ENCODE measurements at regions of chr20 and their contacts with region 1.

Region 1: GRCh38 chr20:407133-407952 is 756 bp upstream of the RBCK1 start:
- DNase-seq: peak; percentile 74
- H3K4me3 Mint-ChIP-seq: peak overlapping the region; percentile 86
- H3K27ac Mint-ChIP-seq: peak overlapping the region; percentile 85
- H3K4me1 Mint-ChIP-seq: peaks cover 43% of the 10 kb centered on the region
- H3K27me3 Mint-ChIP-seq: no peaks in the 10 kb centered on the region

Region 2: GRCh38 chr20:381581-382290 is 25.6 kb before region 1 on chr20:
- CTCF ChIA-PET with region 1: interaction called, 4 read pairs
- intact Hi-C with region 1: loop called (anchors 1 kb)
- DNase-seq: peak; percentile 81
- H3K4me3 Mint-ChIP-seq: peak overlapping the region; percentile 83
- H3K27ac Mint-ChIP-seq: peak overlapping the region; percentile 83
- H3K4me1 Mint-ChIP-seq: peaks cover 25% of the 10 kb centered on the region
- H3K27me3 Mint-ChIP-seq: no peaks in the 10 kb centered on the region

Region 3: DNA sequence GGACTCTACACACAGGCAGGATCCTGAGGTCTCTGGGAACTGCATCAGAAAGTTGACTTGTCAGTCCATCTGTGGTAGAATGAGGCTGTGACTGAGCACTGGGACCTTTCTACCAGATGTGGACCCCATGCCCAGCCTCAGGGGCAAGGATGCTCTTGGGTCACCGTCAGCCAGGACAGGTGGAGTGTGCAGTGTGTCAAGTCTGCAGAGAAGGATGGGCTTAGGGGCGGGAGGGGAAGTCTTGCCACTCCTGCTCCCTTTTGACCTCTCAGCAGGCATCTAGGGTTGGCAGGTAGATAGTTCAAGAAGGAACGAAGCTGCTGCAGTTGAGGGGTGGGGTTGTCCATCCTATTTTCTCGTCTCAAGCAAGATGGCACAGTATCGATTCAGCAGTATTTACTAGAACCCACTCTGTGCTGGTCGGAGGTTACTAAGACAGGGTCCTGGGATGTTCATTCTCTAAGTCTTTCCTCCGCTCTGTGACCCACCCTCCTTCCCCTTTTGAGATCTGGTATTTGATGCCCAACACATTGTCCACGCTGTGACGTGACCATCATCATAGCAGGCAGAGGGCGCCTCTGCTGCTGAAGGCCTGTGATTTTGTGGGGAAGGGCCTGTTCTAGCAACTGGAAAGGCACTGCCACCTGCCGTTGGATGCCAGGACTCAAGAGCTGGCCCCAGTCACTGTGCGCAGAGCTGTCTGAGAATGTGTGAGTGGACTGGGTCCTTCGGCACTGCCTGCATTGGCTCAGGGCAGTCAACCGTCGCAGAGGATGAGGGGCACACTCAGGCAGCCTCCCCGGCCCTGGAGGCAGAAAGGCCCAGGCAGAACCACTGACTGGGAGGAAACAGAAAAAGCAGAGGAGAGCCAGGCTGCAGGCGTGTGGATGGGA is 23.9 kb after region 1 on chr20:
- CTCF ChIA-PET with region 1: interaction called, 5 read pairs
- intact Hi-C with region 1: loop called (anchors 1 kb)
- DNase-seq: peak; percentile 75
- H3K4me3 Mint-ChIP-seq: no peak overlapping the region
- H3K27ac Mint-ChIP-seq: peak overlapping the region; percentile 89
- H3K4me1 Mint-ChIP-seq: peaks cover 57% of the 10 kb centered on the region
- H3K27me3 Mint-ChIP-seq: no peaks in the 10 kb centered on the region

Region 4: DNA sequence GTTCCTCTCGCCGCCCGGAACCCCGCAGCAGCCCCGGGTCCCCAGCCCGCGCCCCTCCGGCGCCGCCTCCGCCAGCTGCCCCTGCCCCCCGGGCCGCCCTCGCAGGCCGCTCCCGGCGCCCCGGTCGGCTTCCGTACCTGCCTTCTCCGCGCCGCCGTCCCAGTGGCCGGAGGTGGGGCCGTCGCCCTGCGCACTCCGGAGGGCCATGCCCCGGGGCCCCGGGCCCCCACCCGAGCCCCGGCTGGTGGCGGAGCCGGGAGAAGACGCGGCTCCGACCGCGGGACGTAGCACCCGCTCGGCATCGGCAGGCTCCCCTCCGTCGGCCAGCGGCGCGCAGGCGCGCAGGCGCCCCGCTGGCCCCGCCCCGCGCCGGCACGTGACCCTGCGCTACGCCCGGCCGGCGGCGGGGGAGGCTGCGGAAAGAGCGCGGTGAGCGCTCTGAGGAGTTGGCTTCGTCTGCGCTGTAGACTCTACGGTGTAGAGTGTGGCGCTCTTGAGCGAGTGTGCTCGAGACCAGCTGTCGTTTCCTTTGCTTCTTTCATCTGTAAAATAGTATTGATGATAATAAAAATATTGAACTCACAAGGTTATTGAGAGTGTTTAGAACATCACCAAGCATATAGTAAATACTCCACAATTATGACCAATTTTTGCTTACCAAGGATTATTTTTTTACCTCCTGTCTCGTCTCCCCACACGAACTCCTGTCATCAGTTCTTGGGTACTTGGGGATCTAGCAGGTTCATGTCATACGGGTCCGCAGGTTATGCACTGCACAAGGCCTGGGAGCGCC is 55.1 kb after region 1 on chr20 and contains the start of gene TBC1D20:
- CTCF ChIA-PET with region 1: interaction called, 5 read pairs
- intact Hi-C with region 1: loop called (anchors 1 kb)
- DNase-seq: peak; percentile 86
- H3K4me3 Mint-ChIP-seq: peak within 1 kb of the TSS; percentile 96
- H3K27ac Mint-ChIP-seq: peak within 1 kb of the TSS; percentile 86
- H3K4me1 Mint-ChIP-seq: peaks cover 41% of the 10 kb centered on the region
- H3K27me3 Mint-ChIP-seq: no peaks in the 10 kb centered on the region
- total RNA-seq, gene TBC1D20: 16.2 to 17.4 TPM

Region 5: GRCh38 chr20:478949-479429 is 71.6 kb after region 1 on chr20:
- CTCF ChIA-PET with region 1: interaction called, 3 read pairs
- intact Hi-C with region 1: loop called (anchors 1 kb)
- DNase-seq: peak; percentile 41
- H3K4me3 Mint-ChIP-seq: no peak overlapping the region
- H3K27ac Mint-ChIP-seq: no peak overlapping the region
- H3K4me1 Mint-ChIP-seq: peaks cover 22% of the 10 kb centered on the region
- H3K27me3 Mint-ChIP-seq: no peaks in the 10 kb centered on the region

Region 6: DNA sequence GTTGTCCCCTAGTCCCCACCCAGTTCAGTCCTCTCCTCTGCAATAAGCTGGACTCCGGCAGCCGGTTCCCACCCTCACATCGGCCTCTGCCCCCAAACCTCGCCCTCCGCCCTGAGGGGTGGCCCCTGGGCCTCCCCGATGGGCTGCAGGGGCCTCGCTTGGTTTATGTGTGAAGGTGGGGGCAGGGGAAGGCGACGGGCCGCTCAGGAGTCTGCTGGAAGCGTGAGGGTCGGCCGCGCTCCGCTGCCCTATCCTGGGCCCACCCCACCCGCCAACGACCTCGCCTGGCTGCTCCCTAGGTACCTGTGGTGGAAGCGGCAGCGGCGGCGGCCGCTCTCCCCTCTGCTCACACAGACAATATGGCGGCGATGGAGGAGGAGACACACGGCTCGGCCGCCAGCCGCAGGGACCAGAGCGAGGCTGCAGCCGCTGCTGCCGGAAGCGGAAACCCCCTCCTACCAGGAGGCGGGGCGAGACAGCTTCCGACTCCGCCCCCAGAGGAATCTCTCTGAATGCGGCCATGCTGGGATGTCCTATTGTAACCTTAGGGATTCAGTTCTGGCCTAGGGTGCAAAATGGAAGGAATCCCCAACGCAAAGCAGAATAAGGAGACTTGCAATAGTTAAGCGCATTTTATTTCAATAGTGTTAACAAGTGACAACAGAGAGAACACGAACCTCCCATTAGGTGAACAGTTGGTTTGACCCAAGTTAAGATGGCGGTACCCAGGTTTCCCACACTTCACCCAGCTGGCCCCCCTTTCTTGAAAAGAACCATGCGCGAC is 136.2 kb after region 1 on chr20 and contains the start of gene CSNK2A1:
- CTCF ChIA-PET with region 1: no interaction called
- intact Hi-C with region 1: loop called (anchors 2 kb)
- DNase-seq: peak; percentile 96
- H3K4me3 Mint-ChIP-seq: peak within 1 kb of the TSS; percentile 81
- H3K27ac Mint-ChIP-seq: peak within 1 kb of the TSS; percentile 97
- H3K4me1 Mint-ChIP-seq: peaks cover 49% of the 10 kb centered on the region
- H3K27me3 Mint-ChIP-seq: peaks cover 2% of the 10 kb centered on the region
- total RNA-seq, gene CSNK2A1: 164 to 167 TPM

Region 7: DNA sequence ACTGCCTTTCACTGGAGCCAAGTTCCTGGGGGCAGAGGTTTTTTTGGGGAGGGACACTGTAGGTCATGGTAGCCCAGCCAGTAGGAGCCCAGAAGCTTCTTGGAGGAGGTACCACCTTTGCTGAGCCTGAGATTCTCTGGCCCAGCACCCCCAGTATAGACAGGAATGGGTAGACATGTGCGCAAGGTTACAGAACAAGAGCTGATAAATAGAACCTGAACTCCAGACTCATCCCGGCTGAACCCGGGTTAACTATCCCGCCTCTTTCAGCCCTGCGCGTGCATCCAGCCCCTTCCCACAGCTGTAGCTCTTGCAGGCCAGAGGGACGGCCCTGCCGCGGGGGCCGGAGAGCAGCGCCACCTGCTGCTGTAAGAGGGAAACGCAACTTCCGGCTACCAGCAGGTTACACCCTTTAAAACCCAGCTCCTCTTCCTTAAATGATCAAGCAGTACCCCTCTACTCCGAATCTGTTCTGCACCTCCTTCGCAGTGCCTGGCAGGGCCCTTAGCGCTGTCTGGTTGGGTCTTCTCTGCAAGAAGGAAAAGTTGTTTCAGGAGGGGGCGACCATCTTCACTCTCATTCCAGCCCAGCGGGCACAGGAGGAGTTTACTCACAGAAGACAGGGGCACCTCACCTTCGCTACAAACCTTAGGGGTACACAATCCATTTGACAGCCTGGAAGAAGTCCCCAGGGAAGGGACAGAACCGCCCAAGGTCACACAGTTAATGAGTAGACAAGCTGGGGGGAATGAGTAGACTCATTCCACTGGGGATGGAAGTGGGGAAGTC is 238.2 kb after region 1 on chr20:
- CTCF ChIA-PET with region 1: interaction called, 7 read pairs
- intact Hi-C with region 1: loop called (anchors 1 kb)
- DNase-seq: peak; percentile 76
- H3K4me3 Mint-ChIP-seq: no peak overlapping the region
- H3K27ac Mint-ChIP-seq: no peak overlapping the region
- H3K4me1 Mint-ChIP-seq: peaks cover 9% of the 10 kb centered on the region
- H3K27me3 Mint-ChIP-seq: peaks cover 21% of the 10 kb centered on the region

Measured in activated naive CD4-positive, alpha-beta T cell treated with anti-CD3 and anti-CD28 coated beads for 36 hours (primary cell).